ENCODE measurements at regions of chr5 and their contacts with region 1.

Region 1: GRCh38 chr5:133063965-133064364 is 12.2 kb downstream of the HSPA4 start:
- DNase-seq: no peak
- H3K4me3 ChIP-seq: no peak overlapping the region
- H3K27ac ChIP-seq: no peak overlapping the region
- H3K4me1 ChIP-seq: peaks cover 8% of the 10 kb centered on the region
- CTCF ChIP-seq: no peak

Region 2: DNA sequence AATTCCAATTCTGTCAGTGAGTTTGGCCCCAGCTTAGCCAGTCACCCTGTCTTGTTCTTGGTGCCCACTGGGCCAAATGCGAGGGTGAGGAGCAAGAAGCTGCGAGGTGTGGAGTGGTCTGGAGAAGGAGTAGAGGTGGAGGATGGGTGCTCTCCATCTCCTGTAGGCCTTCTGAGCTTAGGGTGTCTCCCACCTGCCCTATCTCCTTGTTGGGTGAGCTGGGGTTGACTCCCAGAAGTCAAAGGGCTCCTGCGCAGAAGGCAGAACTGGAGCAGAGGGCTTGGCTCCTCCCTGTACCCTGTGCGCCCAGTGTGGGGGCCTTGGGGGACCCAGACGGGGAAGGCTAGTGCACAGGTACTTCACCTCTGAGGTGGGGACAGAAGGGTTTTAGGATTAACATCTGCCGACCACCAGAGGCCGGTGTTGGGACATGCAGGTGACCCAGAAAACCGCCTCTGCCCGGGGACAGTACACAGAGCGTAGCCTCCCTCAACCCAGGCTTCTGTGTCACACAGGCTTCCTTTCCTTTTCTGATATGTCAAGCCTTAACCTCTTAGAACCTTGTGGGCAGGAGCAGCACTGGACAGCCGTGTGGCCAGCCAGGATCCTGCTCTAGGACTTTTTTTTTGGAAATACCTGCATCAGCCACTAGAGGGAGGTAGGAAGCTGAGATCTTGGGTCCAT is 537.5 kb before region 1 on chr5:
- CTCF ChIA-PET with region 1: no interaction called
- POLR2A ChIA-PET with region 1: no interaction called
- intact Hi-C with region 1: no loop called
- DNase-seq: peak; percentile 65
- H3K4me3 ChIP-seq: no peak overlapping the region
- H3K27ac ChIP-seq: no peak overlapping the region
- H3K4me1 ChIP-seq: peaks cover 29% of the 10 kb centered on the region
- CTCF ChIP-seq: peak; percentile 100

Region 3: DNA sequence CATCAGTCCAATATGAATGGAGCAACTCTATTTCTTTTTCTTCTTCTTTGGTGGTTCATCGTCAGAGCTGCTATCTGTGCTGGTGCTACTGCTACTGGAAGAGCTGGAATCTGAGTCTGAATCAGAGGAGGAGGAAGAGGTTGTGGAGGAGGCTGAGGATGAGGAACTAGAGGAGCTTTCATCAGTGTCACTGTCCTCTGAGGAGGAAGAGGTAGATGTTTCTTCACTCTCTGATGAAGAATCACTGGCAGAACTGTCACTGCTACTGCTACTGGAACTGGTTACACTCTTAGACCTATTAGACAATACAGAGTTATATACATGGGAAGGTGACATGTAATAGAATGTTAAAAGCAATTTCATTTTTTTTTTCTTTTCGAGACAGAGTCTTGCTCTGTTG is 65.4 kb before region 1 on chr5:
- CTCF ChIA-PET with region 1: no interaction called
- POLR2A ChIA-PET with region 1: no interaction called
- intact Hi-C with region 1: no loop called
- DNase-seq: no peak
- H3K4me3 ChIP-seq: no peak overlapping the region
- H3K27ac ChIP-seq: no peak overlapping the region
- H3K4me1 ChIP-seq: no peaks in the 10 kb centered on the region
- CTCF ChIP-seq: no peak

Region 4: DNA sequence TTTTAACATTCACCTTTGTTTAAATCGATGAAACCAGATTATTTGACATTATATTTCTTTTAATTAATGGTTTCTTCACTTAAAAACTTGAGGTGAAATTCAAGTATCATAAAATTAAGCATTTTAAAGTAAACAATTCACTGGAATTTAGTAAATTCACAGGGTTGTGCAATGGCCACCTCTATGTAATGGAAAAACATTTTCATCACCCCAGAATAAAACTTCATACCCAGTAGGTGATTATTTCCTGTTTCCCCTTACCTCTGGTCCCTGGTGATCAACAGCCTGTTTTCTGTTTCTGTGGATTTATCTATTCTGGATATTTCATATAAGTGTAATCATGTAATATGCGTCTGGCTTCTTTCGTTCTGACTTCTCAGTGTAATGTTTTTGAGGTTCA is 15.1 kb after region 1 on chr5:
- CTCF ChIA-PET with region 1: no interaction called
- POLR2A ChIA-PET with region 1: interaction called, 12 read pairs
- intact Hi-C with region 1: no loop called
- DNase-seq: no peak
- H3K4me3 ChIP-seq: no peak overlapping the region
- H3K27ac ChIP-seq: no peak overlapping the region
- H3K4me1 ChIP-seq: no peaks in the 10 kb centered on the region
- CTCF ChIP-seq: no peak

Measured in OCI-LY7 (cell line).